ENCODE measurements at regions of chr3 and their contacts with region 1.

Region 1: DNA sequence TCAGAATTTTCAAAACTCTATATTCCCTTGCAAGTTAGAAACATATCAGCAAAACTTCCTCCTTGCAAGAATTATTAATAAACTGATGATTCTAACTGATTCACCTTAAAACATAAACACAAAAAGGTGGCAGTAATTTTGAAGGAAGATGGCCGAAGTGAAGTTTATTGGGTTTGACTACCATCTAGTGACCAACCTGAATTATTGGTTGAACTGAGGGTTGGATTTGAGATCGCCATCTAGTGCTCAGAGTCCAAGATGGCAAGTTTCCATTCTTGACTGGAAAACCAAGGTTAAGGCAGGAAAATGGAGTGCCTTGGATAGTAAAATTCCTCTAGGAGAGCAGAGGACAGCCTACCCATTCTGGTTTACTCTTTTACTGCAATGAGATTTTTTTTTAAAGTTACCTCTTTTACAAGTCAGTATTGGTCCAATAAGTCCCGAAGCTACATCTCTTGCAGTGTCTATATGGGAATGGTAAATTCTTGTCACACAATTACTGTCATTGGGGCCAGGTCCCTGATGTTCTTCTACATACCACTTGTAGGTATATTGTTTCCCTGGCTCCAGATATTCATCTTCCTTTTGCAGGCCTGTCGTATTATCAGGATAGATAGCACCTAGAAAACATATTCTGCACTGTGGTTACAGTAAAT is 51.6 kb upstream of the CP start:
- DNase-seq: no peak
- ATAC-seq: peak; percentile 84

Region 2: GRCh38 chr3:147336543-147337278 is 1936.5 kb before region 1 on chr3:
- intact Hi-C with region 1: no loop called
- DNase-seq: no peak
- ATAC-seq: no peak

Region 3: DNA sequence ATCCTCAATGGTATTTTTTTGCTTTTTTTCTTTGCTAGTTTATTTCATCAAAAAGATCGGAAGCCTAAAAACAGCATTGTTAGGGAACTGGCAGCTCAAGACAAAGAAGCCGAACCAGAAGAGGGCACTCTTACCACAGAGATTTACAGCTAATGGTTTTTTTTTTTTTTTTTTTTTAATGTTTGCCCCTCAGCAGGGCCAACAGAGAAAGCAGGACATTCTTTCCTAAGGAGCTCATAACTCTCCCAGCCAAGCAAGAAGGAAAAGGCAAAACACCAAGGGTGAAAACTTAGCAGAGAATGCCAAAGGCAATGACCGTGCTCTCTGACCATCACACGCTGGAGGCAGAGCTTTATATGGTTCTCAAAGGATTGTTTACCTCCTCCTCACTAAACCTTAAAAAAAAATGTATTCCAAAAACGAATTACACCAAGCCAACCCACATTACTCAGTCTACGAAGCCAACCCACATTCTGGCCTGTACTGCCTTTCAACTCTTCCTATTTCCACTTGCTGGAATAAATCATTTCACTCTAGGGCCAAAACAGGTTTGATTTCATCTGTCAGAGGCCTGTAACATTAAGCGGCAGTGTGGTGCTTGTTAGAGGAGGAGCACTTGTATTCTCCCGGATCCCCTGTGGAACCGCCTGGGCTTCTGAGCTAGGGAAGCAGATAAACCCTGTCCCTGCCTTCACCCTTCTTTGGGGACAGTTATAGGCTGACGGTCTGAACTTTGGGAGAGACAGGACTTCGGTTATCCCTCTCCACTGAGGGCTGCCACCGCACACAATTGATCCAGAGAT is 317.5 kb before region 1 on chr3:
- intact Hi-C with region 1: loop called (anchors 1 kb)
- DNase-seq: no peak
- ATAC-seq: peak; percentile 92

Region 4: GRCh38 chr3:149120051-149120972 is 152.9 kb before region 1 on chr3:
- intact Hi-C with region 1: loop called (anchors 1 kb)
- DNase-seq: no peak
- ATAC-seq: peak; percentile 59

Region 5: DNA sequence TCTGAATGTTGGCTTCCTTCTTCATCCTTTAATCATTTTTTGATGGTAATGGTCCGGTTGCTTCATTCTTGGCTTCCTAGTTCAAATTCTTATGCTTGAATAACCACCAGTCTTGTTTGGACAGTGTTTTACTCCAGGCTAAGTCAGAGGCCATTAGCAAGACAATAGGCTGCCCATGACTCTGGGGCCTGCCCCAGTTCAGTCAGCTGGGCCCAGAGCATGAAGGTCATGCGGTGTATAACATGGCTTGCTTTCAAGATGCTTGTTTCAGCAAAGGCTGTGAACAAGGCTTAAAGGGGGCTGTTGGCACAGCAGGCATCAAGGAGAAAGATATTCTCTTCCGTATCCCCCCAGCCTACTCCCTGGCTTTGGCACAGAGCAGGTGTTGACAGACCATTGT is 46.5 kb after region 1 on chr3:
- intact Hi-C with region 1: no loop called
- DNase-seq: no peak
- ATAC-seq: no peak

Measured in Right ventricle myocardium inferior (tissue), 1 donor.